ENCODE measurements at regions of chr5 and their contacts with region 1.

Region 1: GRCh38 chr5:138128334-138128733 is 10.9 kb downstream of the NME5 start:
- DNase-seq: no peak
- H3K4me3 ChIP-seq: no peak overlapping the region
- H3K27ac ChIP-seq: no peak overlapping the region
- H3K4me1 ChIP-seq: no peaks in the 10 kb centered on the region
- H3K27me3 ChIP-seq: no peaks in the 10 kb centered on the region
- CTCF ChIP-seq: no peak

Region 2: GRCh38 chr5:137629646-137630045 is 498.7 kb before region 1 on chr5:
- CTCF ChIA-PET with region 1: interaction called, 4 read pairs
- POLR2A ChIA-PET with region 1: no interaction called
- intact Hi-C with region 1: loop called (anchors 2 kb)
- DNase-seq: peak; percentile 67
- H3K4me3 ChIP-seq: no peak overlapping the region
- H3K27ac ChIP-seq: no peak overlapping the region
- H3K4me1 ChIP-seq: no peaks in the 10 kb centered on the region
- H3K27me3 ChIP-seq: no peaks in the 10 kb centered on the region
- CTCF ChIP-seq: peak; percentile 87

Region 3: DNA sequence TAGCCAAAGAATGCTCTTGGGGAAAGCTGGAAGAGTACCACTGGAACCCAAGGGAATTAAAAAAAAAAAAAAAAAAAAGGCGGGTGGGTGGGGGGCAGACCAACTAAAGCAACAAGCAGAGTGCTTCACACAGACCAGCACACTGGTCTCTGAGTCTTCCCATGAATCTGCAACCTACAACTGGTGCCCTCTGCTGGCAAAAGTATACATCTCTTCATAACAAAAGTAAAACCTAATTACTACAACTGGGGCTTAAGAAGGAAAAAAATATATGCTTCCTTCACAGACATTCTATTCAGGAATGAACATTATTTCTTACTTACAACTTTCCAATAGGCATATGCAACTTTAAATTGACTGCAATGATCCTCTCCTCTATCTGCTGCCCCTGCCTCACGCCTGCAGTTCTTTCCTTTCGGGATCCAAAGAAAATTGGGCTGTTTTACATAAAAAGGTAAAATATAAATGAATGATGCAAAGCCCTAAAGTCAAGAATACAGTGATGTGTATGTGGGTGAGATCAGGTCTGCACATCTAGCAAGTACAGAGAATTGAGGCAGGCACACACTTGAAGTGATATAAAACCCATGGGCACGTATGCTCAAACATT is 385.2 kb before region 1 on chr5:
- CTCF ChIA-PET with region 1: no interaction called
- POLR2A ChIA-PET with region 1: interaction called, 15 read pairs
- intact Hi-C with region 1: no loop called
- DNase-seq: peak; percentile 87
- H3K4me3 ChIP-seq: no peak overlapping the region
- H3K27ac ChIP-seq: no peak overlapping the region
- H3K4me1 ChIP-seq: no peaks in the 10 kb centered on the region
- H3K27me3 ChIP-seq: no peaks in the 10 kb centered on the region
- CTCF ChIP-seq: peak; percentile 70

Region 4: DNA sequence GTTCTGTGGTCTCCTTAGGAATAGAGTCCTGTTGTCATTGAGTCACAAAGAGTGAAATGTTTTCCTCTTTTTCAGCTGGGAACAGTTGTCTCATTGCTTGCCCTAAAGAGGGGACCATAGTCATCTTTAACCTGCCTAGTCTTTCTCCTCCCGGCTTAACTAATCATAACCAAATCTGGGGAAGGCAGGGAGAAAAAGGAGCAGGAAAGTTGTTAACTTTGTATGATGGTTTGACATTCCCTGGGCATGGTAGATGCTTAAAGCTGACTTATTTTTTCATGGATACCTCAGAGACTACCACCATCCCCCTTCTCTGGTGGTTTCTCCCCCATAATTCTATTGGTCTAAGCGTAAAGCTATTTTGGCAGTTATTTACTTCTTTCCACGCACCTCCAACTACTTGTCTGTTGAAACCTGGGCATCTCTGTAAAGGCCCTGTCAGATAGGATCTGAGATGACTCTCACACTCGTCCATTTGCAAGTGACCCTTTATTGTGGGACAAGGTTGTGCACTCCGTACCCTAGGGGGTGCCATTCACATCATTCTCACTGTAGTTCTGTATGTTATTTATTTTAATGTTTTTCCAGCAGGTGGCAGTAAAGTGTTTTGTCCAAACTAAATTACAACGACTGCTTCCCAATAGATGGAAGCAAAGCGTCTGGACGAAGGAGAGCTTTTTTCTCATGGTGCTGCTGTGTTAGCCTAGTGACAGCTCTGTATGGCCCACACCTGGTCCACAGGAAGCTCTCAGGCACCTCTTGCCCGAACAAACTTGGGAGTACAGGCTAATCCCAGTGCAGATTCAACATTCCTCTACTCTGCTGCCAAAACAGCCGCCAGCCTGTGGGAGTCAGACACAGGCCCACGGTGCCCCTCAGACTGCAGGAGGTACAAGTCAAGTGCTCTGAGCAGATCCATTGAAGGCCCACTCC is 92.5 kb before region 1 on chr5:
- CTCF ChIA-PET with region 1: interaction called, 3 read pairs
- POLR2A ChIA-PET with region 1: no interaction called
- intact Hi-C with region 1: loop called (anchors 1 kb)
- DNase-seq: peak; percentile 93
- H3K4me3 ChIP-seq: no peak overlapping the region
- H3K27ac ChIP-seq: no peak overlapping the region
- H3K4me1 ChIP-seq: peaks cover 6% of the 10 kb centered on the region
- H3K27me3 ChIP-seq: no peaks in the 10 kb centered on the region
- CTCF ChIP-seq: peak; percentile 94

Region 5: GRCh38 chr5:139361835-139362429 is 1233.6 kb after region 1 on chr5:
- CTCF ChIA-PET with region 1: interaction called, 10 read pairs
- POLR2A ChIA-PET with region 1: no interaction called
- intact Hi-C with region 1: no loop called
- DNase-seq: no peak
- H3K4me3 ChIP-seq: no peak overlapping the region
- H3K27ac ChIP-seq: no peak overlapping the region
- H3K4me1 ChIP-seq: no peaks in the 10 kb centered on the region
- H3K27me3 ChIP-seq: no peaks in the 10 kb centered on the region
- CTCF ChIP-seq: no peak